Caco-2 (cell line): ENCODE measurements at regions of chr2 and their contacts with region 1.

Region 1: GRCh38 chr2:98835831-98836385 is 100.1 kb downstream of the CRACDL start:
- DNase-seq: no peak
- H3K4me3 ChIP-seq: no peak overlapping the region
- H3K4me3 Mint-ChIP-seq: no peak overlapping the region
- H3K27ac Mint-ChIP-seq: no peak overlapping the region
- H3K4me1 ChIP-seq: peaks cover 3% of the 10 kb centered on the region; the same call in 1 of the 2 replicates
- H3K4me1 Mint-ChIP-seq: peaks cover 9% of the 10 kb centered on the region
- H3K27me3 ChIP-seq: no peaks in the 10 kb centered on the region
- H3K27me3 Mint-ChIP-seq: no peaks in the 10 kb centered on the region
- CTCF ChIP-seq: no peak

Region 2: GRCh38 chr2:98412751-98413458 is 423.0 kb before region 1 on chr2:
- CTCF ChIA-PET with region 1: no interaction called
- POLR2A ChIA-PET with region 1: no interaction called
- intact Hi-C with region 1: loop called (anchors 1 kb)
- DNase-seq: peak in 1 of 2 experiments; percentile 83
- H3K4me3 ChIP-seq: no peak overlapping the region
- H3K4me3 Mint-ChIP-seq: no peak overlapping the region
- H3K27ac Mint-ChIP-seq: no peak overlapping the region
- H3K4me1 ChIP-seq: 0 out of 2 replicates have a peak, but pooled peaks cover 3% of the 10 kb centered on the region
- H3K4me1 Mint-ChIP-seq: peaks cover 4% of the 10 kb centered on the region
- H3K27me3 ChIP-seq: no peaks in the 10 kb centered on the region
- H3K27me3 Mint-ChIP-seq: no peaks in the 10 kb centered on the region
- CTCF ChIP-seq: peak; percentile 71 to 76

Region 3: GRCh38 chr2:98608116-98608999 is 227.6 kb before region 1 on chr2 and contains the starts of genes COA5 and UNC50:
- CTCF ChIA-PET with region 1: no interaction called
- POLR2A ChIA-PET with region 1: no interaction called
- intact Hi-C with region 1: no loop called
- DNase-seq: peak; percentile 90 to 94
- H3K4me3 ChIP-seq: peak within 1 kb of the TSS; percentile 78
- H3K4me3 Mint-ChIP-seq: peak within 1 kb of the TSS; percentile 86
- H3K27ac Mint-ChIP-seq: peak within 1 kb of the TSS; percentile 82
- H3K4me1 ChIP-seq: peaks cover 5% of the 10 kb centered on the region
- H3K4me1 Mint-ChIP-seq: peaks cover 22% of the 10 kb centered on the region
- H3K27me3 ChIP-seq: no peaks in the 10 kb centered on the region
- H3K27me3 Mint-ChIP-seq: no peaks in the 10 kb centered on the region
- CTCF ChIP-seq: peak in 1 of 2 experiments; percentile 9
- total RNA-seq, gene COA5: 35.7 TPM in 2 replicates
- total RNA-seq, gene UNC50: 39.7 and 40.0 TPM in 2 replicates

Region 4: DNA sequence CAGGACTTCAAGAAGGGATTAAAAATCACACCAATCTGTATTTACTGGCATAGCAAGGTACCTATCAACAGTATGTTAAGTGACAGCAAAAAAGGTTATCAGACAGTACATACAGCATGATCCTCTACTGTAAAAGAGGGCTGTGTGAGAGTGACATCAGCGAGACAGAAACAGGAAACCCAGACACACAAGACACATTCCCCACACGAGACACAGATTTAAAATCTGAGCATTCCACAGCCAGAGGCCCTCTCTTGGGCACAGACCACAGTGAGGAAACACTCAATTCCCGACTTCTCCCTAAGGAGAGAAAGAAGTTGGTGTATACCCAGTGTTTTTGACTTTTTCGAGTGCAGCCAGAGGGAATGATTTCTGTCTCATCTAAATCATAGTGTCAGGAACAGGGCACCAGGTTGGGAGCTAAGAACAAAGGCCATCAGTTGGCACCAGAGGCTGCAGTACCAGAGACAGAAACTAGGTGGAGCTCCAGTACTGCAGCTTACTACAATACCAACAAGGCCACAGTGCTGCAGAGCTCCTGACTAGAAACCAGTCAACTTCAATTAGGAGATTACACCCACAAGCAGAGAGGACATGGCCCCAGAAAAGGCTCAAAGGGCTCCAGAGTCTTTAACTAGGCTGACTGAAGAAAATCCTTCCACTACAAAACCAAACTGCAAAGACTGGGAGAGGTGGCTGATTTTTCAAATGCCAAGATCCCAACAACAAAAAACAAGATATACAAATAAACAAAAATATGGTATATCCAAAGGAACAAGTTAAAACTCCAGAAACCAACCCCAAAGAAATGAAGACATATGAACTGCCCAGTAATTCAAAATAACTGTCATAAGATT is 186.5 kb before region 1 on chr2:
- CTCF ChIA-PET with region 1: interaction called, 10 read pairs
- POLR2A ChIA-PET with region 1: no interaction called
- intact Hi-C with region 1: loop called (anchors 1 kb)
- DNase-seq: peak; percentile 82 to 84
- H3K4me3 ChIP-seq: no peak overlapping the region
- H3K4me3 Mint-ChIP-seq: no peak overlapping the region
- H3K27ac Mint-ChIP-seq: peak overlapping the region; percentile 4
- H3K4me1 ChIP-seq: no peaks in the 10 kb centered on the region
- H3K4me1 Mint-ChIP-seq: peaks cover 17% of the 10 kb centered on the region
- H3K27me3 ChIP-seq: no peaks in the 10 kb centered on the region
- H3K27me3 Mint-ChIP-seq: no peaks in the 10 kb centered on the region
- CTCF ChIP-seq: peak; percentile 95 to 98

Region 5: GRCh38 chr2:98663511-98664090 is 172.3 kb before region 1 on chr2:
- CTCF ChIA-PET with region 1: no interaction called
- POLR2A ChIA-PET with region 1: no interaction called
- intact Hi-C with region 1: no loop called
- DNase-seq: no peak
- H3K4me3 ChIP-seq: no peak overlapping the region
- H3K4me3 Mint-ChIP-seq: no peak overlapping the region
- H3K27ac Mint-ChIP-seq: peak overlapping the region; percentile 22
- H3K4me1 ChIP-seq: peaks cover 4% of the 10 kb centered on the region; the same call in 1 of the 2 replicates
- H3K4me1 Mint-ChIP-seq: peaks cover 5% of the 10 kb centered on the region
- H3K27me3 ChIP-seq: no peaks in the 10 kb centered on the region
- H3K27me3 Mint-ChIP-seq: no peaks in the 10 kb centered on the region
- CTCF ChIP-seq: no peak

Region 6: GRCh38 chr2:98702127-98702802 is 133.6 kb before region 1 on chr2:
- CTCF ChIA-PET with region 1: no interaction called
- POLR2A ChIA-PET with region 1: no interaction called
- intact Hi-C with region 1: loop called (anchors 1 kb)
- DNase-seq: peak; percentile 77 to 89
- H3K4me3 ChIP-seq: no peak overlapping the region
- H3K4me3 Mint-ChIP-seq: peak overlapping the region; percentile 68
- H3K27ac Mint-ChIP-seq: peak overlapping the region; percentile 93
- H3K4me1 ChIP-seq: peaks cover 77% of the 10 kb centered on the region
- H3K4me1 Mint-ChIP-seq: peaks cover 42% of the 10 kb centered on the region
- H3K27me3 ChIP-seq: no peaks in the 10 kb centered on the region
- H3K27me3 Mint-ChIP-seq: no peaks in the 10 kb centered on the region
- CTCF ChIP-seq: no peak

Region 7: DNA sequence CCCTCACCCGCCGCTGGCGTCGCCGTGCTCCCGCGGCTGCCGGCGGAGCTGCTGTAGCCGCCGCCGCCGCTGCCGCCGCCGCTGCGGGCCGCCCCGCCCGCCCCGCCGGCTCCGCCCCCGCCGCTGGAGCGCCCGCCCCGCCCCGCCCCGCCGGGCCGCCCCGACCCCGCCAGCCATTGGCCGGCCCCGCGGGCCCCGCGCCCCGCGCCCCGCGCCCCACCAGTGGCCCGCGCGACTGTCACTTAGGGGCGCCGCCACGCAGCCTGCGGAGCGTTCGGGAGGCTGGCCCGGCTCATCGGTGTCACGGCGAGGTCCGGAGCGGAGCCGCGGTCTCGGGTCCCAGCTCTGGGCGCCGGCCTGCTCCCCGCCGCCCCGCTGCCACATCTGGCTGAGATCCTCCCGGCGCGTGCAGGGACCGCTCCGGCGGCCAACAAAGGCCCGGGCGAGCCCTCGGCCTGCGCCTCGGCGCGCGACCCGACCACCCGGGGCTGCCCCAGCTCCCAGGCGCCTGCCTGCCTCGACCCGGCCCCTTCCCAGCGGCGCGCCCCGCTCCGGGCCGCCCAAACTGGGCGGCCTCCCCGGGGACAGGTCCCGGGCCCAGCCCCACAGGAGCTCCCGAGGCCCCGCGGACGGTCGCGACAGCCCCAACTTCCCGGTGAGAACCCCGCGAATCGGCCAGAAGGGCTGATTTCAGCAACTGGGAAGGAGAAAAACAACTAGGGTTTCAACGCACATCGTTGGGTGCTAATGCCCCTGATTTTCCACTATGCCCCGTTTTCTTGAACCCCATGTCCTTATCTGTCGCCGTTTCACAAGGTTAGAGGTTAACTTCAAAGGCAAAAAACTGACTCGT is 104.6 kb before region 1 on chr2 and contains the start of gene MGAT4A:
- CTCF ChIA-PET with region 1: interaction called, 5 read pairs
- POLR2A ChIA-PET with region 1: no interaction called
- intact Hi-C with region 1: loop called (anchors 5 kb)
- DNase-seq: peak; percentile 79 to 87
- H3K4me3 ChIP-seq: peak within 1 kb of the TSS; percentile 82
- H3K4me3 Mint-ChIP-seq: peak within 1 kb of the TSS; percentile 85
- H3K27ac Mint-ChIP-seq: peak within 1 kb of the TSS; percentile 80
- H3K4me1 ChIP-seq: peaks cover 59% of the 10 kb centered on the region
- H3K4me1 Mint-ChIP-seq: peaks cover 33% of the 10 kb centered on the region
- H3K27me3 ChIP-seq: no peaks in the 10 kb centered on the region
- H3K27me3 Mint-ChIP-seq: no peaks in the 10 kb centered on the region
- CTCF ChIP-seq: no peak
- total RNA-seq, gene MGAT4A: 63.7 and 72.3 TPM in 2 replicates

Region 8: DNA sequence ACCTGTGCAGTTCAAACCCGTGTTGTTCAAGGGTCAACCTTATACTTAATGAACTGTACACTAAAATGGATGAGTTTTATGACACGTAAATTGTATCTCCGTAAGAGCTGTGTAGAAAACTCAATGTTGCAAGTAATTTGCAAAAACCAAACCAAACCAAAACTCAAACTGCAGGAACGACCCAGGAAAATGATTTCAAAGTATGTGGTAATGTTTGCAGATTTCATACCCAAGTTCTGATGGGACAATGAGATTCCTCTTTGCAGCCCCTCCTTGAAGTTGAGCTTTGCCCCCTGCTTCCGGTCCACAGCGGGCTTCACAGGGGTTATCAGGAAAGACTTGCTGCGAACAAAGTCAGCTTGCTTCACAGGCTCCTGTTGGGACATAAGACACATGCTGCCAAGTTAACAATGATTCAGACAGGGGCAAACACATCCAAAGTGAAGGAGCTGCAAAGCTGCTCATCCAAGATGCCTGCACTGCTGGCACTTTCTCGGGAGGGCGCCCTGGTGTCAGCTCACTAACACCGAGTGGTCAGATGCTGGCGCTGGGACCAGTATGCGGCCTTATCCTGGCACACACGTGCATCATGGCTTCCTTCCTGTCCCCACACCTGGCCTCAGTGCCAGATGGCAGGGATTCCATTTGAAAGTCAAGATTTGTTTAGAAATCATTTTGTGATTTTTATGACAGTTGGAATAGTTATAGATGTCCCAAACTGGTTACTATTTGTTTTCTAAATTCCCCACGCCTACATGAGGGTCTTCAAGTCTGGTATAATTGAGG is 39.8 kb before region 1 on chr2:
- CTCF ChIA-PET with region 1: interaction called, 10 read pairs
- POLR2A ChIA-PET with region 1: interaction called, 3 read pairs
- intact Hi-C with region 1: loop called (anchors 2 kb)
- DNase-seq: peak; percentile 90 to 95
- H3K4me3 ChIP-seq: 0 out of 2 replicates have a peak overlapping the region, but pooled peaks have one; percentile 2
- H3K4me3 Mint-ChIP-seq: peak overlapping the region; percentile 56
- H3K27ac Mint-ChIP-seq: peak overlapping the region; percentile 94
- H3K4me1 ChIP-seq: peaks cover 68% of the 10 kb centered on the region
- H3K4me1 Mint-ChIP-seq: peaks cover 54% of the 10 kb centered on the region
- H3K27me3 ChIP-seq: no peaks in the 10 kb centered on the region
- H3K27me3 Mint-ChIP-seq: no peaks in the 10 kb centered on the region
- CTCF ChIP-seq: no peak

Region 9: GRCh38 chr2:99066075-99066958 is 230.4 kb after region 1 on chr2:
- CTCF ChIA-PET with region 1: no interaction called
- POLR2A ChIA-PET with region 1: no interaction called
- intact Hi-C with region 1: loop called (anchors 1 kb)
- DNase-seq: peak; percentile 43 to 44
- H3K4me3 ChIP-seq: no peak overlapping the region
- H3K4me3 Mint-ChIP-seq: no peak overlapping the region
- H3K27ac Mint-ChIP-seq: no peak overlapping the region
- H3K4me1 ChIP-seq: no peaks in the 10 kb centered on the region
- H3K4me1 Mint-ChIP-seq: no peaks in the 10 kb centered on the region
- H3K27me3 ChIP-seq: no peaks in the 10 kb centered on the region
- H3K27me3 Mint-ChIP-seq: no peaks in the 10 kb centered on the region
- CTCF ChIP-seq: peak; percentile 35 to 62